Activated CD4-positive, alpha-beta T cell treated with anti-CD3 and anti-CD28 coated beads for 36 hours (primary cell): ENCODE measurements at regions of chr4 and their contacts with region 1.

Region 1: DNA sequence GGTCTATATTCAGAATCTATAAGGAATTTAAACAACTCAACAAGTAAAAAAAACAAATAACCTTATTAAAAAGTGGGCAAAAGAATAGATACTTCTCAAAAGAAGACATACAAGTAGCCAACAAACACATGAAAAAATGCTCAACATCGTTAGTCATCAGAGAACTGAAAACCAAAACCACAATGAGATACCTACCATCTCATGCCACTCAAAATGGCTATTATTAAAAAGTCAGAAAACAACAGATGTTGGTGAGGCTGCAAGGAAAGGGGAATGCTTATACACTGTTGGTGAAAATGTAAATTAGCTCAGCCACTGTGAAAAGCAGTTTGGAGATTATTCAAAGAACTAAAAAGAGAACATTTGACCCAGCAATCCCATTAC is 201.6 kb downstream of the QDPR start:
- DNase-seq: no peak
- ATAC-seq: no peak
- H3K4me3 Mint-ChIP-seq: no peak overlapping the region
- H3K27ac Mint-ChIP-seq: no peak overlapping the region
- H3K4me1 Mint-ChIP-seq: no peaks in the 10 kb centered on the region
- H3K27me3 Mint-ChIP-seq: peaks cover 2% of the 10 kb centered on the region

Region 2: DNA sequence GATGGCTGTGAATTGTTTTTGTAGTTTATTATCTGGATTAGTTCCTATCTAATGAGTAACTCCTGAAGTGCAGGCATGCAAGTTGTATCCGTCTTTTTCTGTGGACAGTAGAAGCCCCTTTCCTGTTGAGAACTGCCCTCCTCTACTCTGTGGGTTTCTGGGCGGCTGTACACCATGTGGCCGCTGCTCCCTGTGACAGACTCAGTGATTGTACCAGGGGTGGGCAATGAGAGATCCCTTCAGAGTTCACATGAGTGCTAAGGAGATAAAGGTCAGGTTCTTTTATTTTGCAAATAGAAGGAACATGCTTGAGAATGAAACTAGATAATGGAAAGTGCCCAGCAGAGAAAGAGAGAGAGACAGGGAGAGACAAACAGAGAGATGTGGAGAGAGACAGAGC is 1007.6 kb before region 1 on chr4:
- CTCF ChIA-PET with region 1: no interaction called
- POLR2A ChIA-PET with region 1: no interaction called
- intact Hi-C with region 1: loop called in 1 of 2 experiments (anchors 5 kb)
- DNase-seq: no peak
- ATAC-seq: no peak
- H3K4me3 Mint-ChIP-seq: no peak overlapping the region
- H3K27ac Mint-ChIP-seq: no peak overlapping the region
- H3K4me1 Mint-ChIP-seq: no peaks in the 10 kb centered on the region
- H3K27me3 Mint-ChIP-seq: peaks cover 7% of the 10 kb centered on the region